T-cell (primary cell): ENCODE measurements at regions of chr14 and their contacts with region 1.

Region 1: GRCh38 chr14:55094321-55095157 is 34.5 kb upstream of the LGALS3 start:
- DNase-seq: no peak
- ATAC-seq: no peak
- H3K4me3 ChIP-seq: no peak overlapping the region
- H3K4me3 Mint-ChIP-seq: no peak overlapping the region
- H3K27ac ChIP-seq: no peak overlapping the region
- H3K27ac Mint-ChIP-seq: no peak overlapping the region
- H3K4me1 ChIP-seq: peaks cover 0 to 17% of the 10 kb centered on the region in 2 experiments
- H3K4me1 Mint-ChIP-seq: peaks cover 9 to 20% (median 20%) of the 10 kb centered on the region in 3 donors
- H3K27me3 ChIP-seq: no peaks in the 10 kb centered on the region
- H3K27me3 Mint-ChIP-seq: no peaks in the 10 kb centered on the region

Region 2: DNA sequence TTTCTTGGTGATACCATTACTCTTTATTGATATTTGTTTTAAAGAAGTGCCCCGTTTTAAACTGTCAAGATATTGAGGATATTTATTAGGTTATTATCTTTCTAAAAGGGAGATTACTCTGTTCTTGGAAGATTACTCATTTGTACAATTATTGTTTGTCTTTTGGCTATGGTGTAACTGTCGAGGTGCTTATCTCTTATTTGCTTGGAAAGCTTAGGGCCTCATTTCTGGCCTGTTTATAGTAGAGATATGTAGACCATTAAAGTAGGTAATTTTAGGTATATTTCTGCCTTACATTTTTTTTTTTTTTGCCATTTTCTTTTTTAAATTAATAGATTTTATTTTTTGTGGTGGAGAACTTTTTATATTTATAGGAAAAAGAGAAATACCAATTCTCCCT is 559.7 kb after region 1 on chr14:
- CTCF ChIA-PET with region 1: interaction called, 3 to 10 read pairs
- POLR2A ChIA-PET with region 1: no interaction called
- DNase-seq: no peak
- ATAC-seq: no peak
- H3K4me3 ChIP-seq: no peak overlapping the region
- H3K4me3 Mint-ChIP-seq: no peak overlapping the region
- H3K27ac ChIP-seq: no peak overlapping the region
- H3K27ac Mint-ChIP-seq: no peak overlapping the region
- H3K4me1 ChIP-seq: no peaks in the 10 kb centered on the region
- H3K4me1 Mint-ChIP-seq: no peaks in the 10 kb centered on the region
- H3K27me3 ChIP-seq: no peaks in the 10 kb centered on the region
- H3K27me3 Mint-ChIP-seq: no peaks in the 10 kb centered on the region

Region 3: GRCh38 chr14:55715889-55716288 is 621.4 kb after region 1 on chr14:
- CTCF ChIA-PET with region 1: no interaction called
- POLR2A ChIA-PET with region 1: no interaction called
- DNase-seq: no peak
- ATAC-seq: no peak
- H3K4me3 ChIP-seq: no peak overlapping the region
- H3K4me3 Mint-ChIP-seq: no peak overlapping the region
- H3K27ac ChIP-seq: no peak overlapping the region
- H3K27ac Mint-ChIP-seq: no peak overlapping the region
- H3K4me1 ChIP-seq: no peaks in the 10 kb centered on the region
- H3K4me1 Mint-ChIP-seq: no peaks in the 10 kb centered on the region
- H3K27me3 ChIP-seq: no peaks in the 10 kb centered on the region
- H3K27me3 Mint-ChIP-seq: no peaks in the 10 kb centered on the region